Right ventricle myocardium superior (tissue), 1 donor: ENCODE measurements at regions of chr14 and their contacts with region 1.

Region 1: GRCh38 chr14:51283402-51284085 is 43.5 kb downstream of the TMX1 start:
- DNase-seq: no peak
- ATAC-seq: peak; percentile 95

Region 2: GRCh38 chr14:51651388-51652167 is 368.0 kb after region 1 on chr14 and contains the start of gene FRMD6:
- intact Hi-C with region 1: loop called (anchors 5 kb)
- DNase-seq: peak; percentile 93
- ATAC-seq: peak; percentile 95
- total RNA-seq, gene FRMD6: 7.4 TPM